PC-9 (cell line): ENCODE measurements at regions of chr12 and their contacts with region 1.

Region 1: DNA sequence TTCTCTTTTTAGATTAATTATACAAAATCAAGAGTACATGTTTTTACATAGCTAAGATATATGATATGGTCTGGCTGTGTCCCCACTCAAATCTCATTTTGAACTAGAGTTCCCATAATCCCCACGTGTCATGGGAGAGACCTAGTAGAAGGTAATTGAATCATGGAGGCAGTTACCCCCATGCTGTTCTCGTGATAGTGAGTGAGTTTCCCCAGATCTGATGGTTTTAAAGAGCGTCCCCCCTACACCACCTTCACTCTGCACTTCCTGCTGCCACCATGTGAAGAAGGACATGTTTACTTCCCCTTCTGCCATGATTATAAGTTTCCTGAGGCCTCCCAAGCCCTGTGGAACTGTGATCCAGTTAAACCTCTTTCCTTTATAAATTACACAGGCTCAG is 21.4 kb upstream of the DRAM1 start:
- DNase-seq: no peak
- H3K4me3 ChIP-seq: no peak overlapping the region
- H3K27ac ChIP-seq: no peak overlapping the region
- H3K4me1 ChIP-seq: peaks cover 32% of the 10 kb centered on the region
- H3K27me3 ChIP-seq: no peaks in the 10 kb centered on the region
- CTCF ChIP-seq: no peak

Region 2: GRCh38 chr12:101891462-101892273 is 35.7 kb after region 1 on chr12:
- CTCF ChIA-PET with region 1: no interaction called
- POLR2A ChIA-PET with region 1: interaction called, 17 read pairs
- intact Hi-C with region 1: no loop called
- DNase-seq: peak; percentile 10 to 61
- H3K4me3 ChIP-seq: 0 out of 2 replicates have a peak overlapping the region, but pooled peaks have one; percentile 6
- H3K27ac ChIP-seq: peak overlapping the region; percentile 67
- H3K4me1 ChIP-seq: peaks cover 42% of the 10 kb centered on the region
- H3K27me3 ChIP-seq: no peaks in the 10 kb centered on the region
- CTCF ChIP-seq: no peak